ENCODE measurements at regions of chr1 and their contacts with region 1.

Region 1: GRCh38 chr1:70509996-70510876 is 99.2 kb downstream of the CTH start:
- DNase-seq: no peak
- H3K4me3 ChIP-seq: no peak overlapping the region
- H3K27ac ChIP-seq: no peak overlapping the region
- H3K4me1 ChIP-seq: no peaks in the 10 kb centered on the region
- H3K27me3 ChIP-seq: no peaks in the 10 kb centered on the region
- CTCF ChIP-seq: peak; percentile 43 to 67 (median 62)
- EP300 ChIP-seq: no peak
- POLR2A ChIP-seq: no peak

Region 2: DNA sequence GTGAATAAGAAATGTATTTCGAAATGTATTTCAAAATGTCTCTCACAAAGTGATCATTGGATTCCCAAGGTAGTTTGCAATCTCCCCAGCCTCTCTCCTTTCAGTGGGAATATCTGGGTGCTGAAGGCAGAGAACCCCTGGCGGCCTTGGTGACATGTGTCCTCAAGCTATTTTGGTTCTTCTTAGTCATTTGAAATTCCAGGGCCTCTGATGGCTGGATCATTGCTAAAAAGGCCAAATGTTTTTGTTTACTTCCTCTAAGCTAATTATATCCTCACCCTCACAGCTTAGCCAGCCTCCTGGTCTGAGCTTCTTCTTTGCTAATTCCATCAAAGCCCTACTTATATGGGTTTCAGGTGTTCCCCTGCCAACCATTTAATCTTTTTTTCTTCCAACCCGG is 376.1 kb before region 1 on chr1:
- intact Hi-C with region 1: loop called (anchors 2 kb)
- DNase-seq: no peak
- H3K4me3 ChIP-seq: no peak overlapping the region
- H3K27ac ChIP-seq: no peak overlapping the region
- H3K4me1 ChIP-seq: no peaks in the 10 kb centered on the region
- H3K27me3 ChIP-seq: no peaks in the 10 kb centered on the region
- CTCF ChIP-seq: no peak
- EP300 ChIP-seq: no peak
- POLR2A ChIP-seq: no peak

Region 3: GRCh38 chr1:70436622-70437251 is 73.5 kb before region 1 on chr1:
- intact Hi-C with region 1: loop called (anchors 2 kb)
- DNase-seq: no peak
- H3K4me3 ChIP-seq: no peak overlapping the region
- H3K27ac ChIP-seq: peak overlapping the region in 3 of 4 donors; percentile 10 to 49 (median 23)
- H3K4me1 ChIP-seq: no peaks in the 10 kb centered on the region
- H3K27me3 ChIP-seq: no peaks in the 10 kb centered on the region
- CTCF ChIP-seq: peak in 2 of 4 experiments; percentile 39 to 40
- EP300 ChIP-seq: no peak
- POLR2A ChIP-seq: no peak